ENCODE measurements at regions of chrX and their contacts with region 1.

Region 1: GRCh38 chrX:15619061-15619777 is 18.5 kb upstream of the ACE2 start:
- DNase-seq: peak; percentile 54 to 95
- H3K4me3 ChIP-seq: peak overlapping the region; percentile 39; the same call in 1 of the 2 replicates
- H3K27ac ChIP-seq: peak overlapping the region; percentile 93
- H3K4me1 ChIP-seq: peaks cover 30% of the 10 kb centered on the region
- H3K27me3 ChIP-seq: no peaks in the 10 kb centered on the region
- CTCF ChIP-seq: no peak

Region 2: DNA sequence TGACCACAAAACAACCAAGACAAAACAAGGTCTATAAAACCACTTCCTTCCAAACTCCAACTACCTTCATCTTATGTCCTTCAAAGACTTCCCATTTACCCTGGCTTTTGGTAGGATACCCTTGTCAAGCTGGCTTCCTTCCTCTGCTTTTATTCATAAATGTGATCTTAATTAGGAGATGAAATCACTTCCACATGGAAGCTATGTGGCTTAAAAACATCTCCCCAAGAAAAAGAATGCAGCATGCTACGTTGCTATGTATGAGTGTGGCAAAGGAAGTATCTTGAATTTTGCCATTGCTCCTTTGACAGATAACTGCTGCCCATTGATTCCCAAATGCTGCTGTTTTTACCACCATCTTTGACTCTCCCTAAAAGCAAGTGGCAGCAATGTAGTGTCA is 188.6 kb before region 1 on chrX:
- CTCF ChIA-PET with region 1: no interaction called
- POLR2A ChIA-PET with region 1: no interaction called
- intact Hi-C with region 1: no loop called
- DNase-seq: no peak
- H3K4me3 ChIP-seq: no peak overlapping the region
- H3K27ac ChIP-seq: no peak overlapping the region
- H3K4me1 ChIP-seq: no peaks in the 10 kb centered on the region
- H3K27me3 ChIP-seq: no peaks in the 10 kb centered on the region
- CTCF ChIP-seq: no peak

Region 3: GRCh38 chrX:15563056-15563455 is 56.2 kb before region 1 on chrX:
- CTCF ChIA-PET with region 1: no interaction called
- POLR2A ChIA-PET with region 1: no interaction called
- intact Hi-C with region 1: no loop called
- DNase-seq: no peak
- H3K4me3 ChIP-seq: no peak overlapping the region
- H3K27ac ChIP-seq: no peak overlapping the region
- H3K4me1 ChIP-seq: peaks cover 6% of the 10 kb centered on the region
- H3K27me3 ChIP-seq: no peaks in the 10 kb centered on the region
- CTCF ChIP-seq: no peak

Region 4: GRCh38 chrX:15598036-15598435 is 21.2 kb before region 1 on chrX:
- CTCF ChIA-PET with region 1: no interaction called
- POLR2A ChIA-PET with region 1: interaction called, 6 read pairs
- intact Hi-C with region 1: loop called (anchors 1 kb)
- DNase-seq: peak; percentile 9 to 83
- H3K4me3 ChIP-seq: no peak overlapping the region
- H3K27ac ChIP-seq: peak overlapping the region; percentile 59
- H3K4me1 ChIP-seq: peaks cover 54% of the 10 kb centered on the region
- H3K27me3 ChIP-seq: no peaks in the 10 kb centered on the region
- CTCF ChIP-seq: no peak

Measured in PC-9 (cell line).